Activated naive CD4-positive, alpha-beta T cell treated with anti-CD3 and anti-CD28 coated beads for 36 hours (primary cell): ENCODE measurements at regions of chr15 and their contacts with region 1.

Region 1: GRCh38 chr15:39629371-39629770 is 48.5 kb downstream of the THBS1 start:
- DNase-seq: peak; percentile 82
- H3K4me3 Mint-ChIP-seq: no peak overlapping the region
- H3K27ac Mint-ChIP-seq: peak overlapping the region; percentile 14
- H3K4me1 Mint-ChIP-seq: peaks cover 49% of the 10 kb centered on the region
- H3K27me3 Mint-ChIP-seq: no peaks in the 10 kb centered on the region

Region 2: DNA sequence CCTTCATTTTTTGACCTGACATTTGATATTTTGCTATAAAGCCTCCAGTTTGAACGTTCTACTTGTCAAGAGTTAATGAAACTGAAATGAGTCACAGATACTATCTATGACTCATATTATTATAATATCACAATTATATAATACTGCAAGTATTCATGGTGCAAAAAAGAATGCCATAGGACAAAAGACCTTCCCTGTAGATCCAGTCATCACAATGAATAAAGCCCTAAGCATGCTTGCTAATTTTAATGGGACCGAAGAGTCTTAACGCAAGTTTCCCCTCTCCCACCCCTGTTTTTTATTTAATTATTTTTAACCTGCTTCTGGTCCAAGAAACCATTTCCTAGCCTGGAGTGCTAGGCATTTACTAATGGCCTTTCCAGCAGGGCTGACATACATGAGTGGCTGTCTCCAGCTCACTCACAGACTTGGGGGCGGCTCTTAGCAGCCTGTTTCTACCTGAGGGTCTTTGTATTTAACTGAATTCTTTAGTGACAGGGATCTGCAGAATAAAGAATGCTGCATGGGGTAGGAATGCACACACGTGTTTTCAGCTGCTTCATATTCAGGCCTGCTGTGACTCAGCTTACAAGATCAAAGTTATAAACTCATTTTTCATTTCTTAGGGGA is 12.8 kb after region 1 on chr15:
- CTCF ChIA-PET with region 1: no interaction called
- intact Hi-C with region 1: loop called (anchors 2 kb)
- DNase-seq: no peak
- H3K4me3 Mint-ChIP-seq: no peak overlapping the region
- H3K27ac Mint-ChIP-seq: no peak overlapping the region
- H3K4me1 Mint-ChIP-seq: peaks cover 20% of the 10 kb centered on the region
- H3K27me3 Mint-ChIP-seq: peaks cover 1% of the 10 kb centered on the region

Region 3: GRCh38 chr15:39663704-39664250 is 34.4 kb after region 1 on chr15:
- CTCF ChIA-PET with region 1: no interaction called
- intact Hi-C with region 1: loop called (anchors 1 kb)
- DNase-seq: no peak
- H3K4me3 Mint-ChIP-seq: no peak overlapping the region
- H3K27ac Mint-ChIP-seq: no peak overlapping the region
- H3K4me1 Mint-ChIP-seq: no peaks in the 10 kb centered on the region
- H3K27me3 Mint-ChIP-seq: peaks cover 4% of the 10 kb centered on the region